ENCODE measurements at regions of chr1 and their contacts with region 1.

Region 1: DNA sequence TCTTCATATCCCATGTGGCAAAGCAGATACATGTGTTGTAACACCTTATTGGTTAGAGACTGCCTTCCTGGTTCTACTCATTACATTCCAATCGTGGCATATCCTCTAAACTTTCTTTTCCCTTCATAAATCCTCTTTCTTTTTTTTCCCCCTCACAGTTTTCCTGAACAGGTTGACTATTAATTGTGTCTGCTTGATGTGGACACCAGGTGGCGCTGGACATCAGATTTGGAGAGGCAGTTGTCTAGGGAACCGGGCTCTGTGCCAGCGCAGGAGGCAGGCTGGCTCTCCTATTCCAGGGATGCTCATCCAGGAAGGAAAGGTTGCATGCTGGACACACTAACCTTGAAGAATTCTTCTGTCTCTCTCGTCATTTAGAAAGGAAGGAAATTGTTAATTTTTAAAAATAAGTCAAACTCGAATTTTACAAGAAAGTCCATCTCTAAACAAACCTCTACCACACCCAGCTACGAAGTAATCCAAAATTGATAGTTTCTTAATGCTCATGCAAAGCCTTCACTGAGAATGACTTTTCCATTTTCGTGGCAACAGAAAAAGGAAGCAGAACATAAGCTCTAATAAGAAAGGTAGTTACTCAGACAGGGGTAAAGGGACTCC is 59.4 kb upstream of the ASB17 start:
- DNase-seq: peak; percentile 25
- H3K4me3 Mint-ChIP-seq: no peak overlapping the region
- H3K27ac Mint-ChIP-seq: no peak overlapping the region
- H3K4me1 Mint-ChIP-seq: no peaks in the 10 kb centered on the region
- H3K27me3 Mint-ChIP-seq: peaks cover 9% of the 10 kb centered on the region

Region 2: GRCh38 chr1:77126307-77126706 is 1134.7 kb after region 1 on chr1:
- intact Hi-C with region 1: loop called (anchors 5 kb)
- DNase-seq: no peak
- H3K4me3 Mint-ChIP-seq: no peak overlapping the region
- H3K27ac Mint-ChIP-seq: no peak overlapping the region
- H3K4me1 Mint-ChIP-seq: no peaks in the 10 kb centered on the region
- H3K27me3 Mint-ChIP-seq: no peaks in the 10 kb centered on the region

Region 3: DNA sequence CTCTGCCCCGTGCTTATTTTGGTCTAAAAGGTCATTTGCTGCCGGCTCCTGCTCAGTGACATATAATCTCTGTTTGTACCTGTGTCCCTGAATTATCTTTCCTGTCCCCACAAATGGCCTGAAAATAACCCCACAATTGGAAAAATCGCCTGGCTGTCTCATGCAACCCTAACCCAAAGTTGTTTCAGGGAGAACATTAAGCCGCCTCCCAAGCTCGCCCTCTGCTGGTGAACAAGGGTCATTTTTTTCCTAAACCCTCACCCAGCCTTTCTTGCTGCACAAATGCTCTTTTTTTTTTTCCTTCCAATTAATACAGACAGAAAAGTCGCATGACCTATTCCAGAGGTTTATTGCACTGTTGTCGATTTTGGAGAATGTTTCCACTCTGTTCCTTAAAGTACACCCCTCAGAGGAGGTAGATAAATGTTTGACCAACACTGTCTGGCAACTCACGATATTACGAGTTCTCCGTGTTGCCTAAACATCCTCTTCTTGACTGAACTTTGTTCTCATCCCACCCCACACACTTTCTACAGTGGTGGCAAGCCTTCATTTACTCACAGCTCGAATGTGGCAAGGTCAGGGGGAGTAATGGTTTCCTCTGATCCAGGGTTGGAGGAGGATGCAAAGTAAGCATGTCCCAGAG is 1542.2 kb after region 1 on chr1:
- intact Hi-C with region 1: loop called (anchors 5 kb)
- DNase-seq: peak; percentile 18
- H3K4me3 Mint-ChIP-seq: no peak overlapping the region
- H3K27ac Mint-ChIP-seq: no peak overlapping the region
- H3K4me1 Mint-ChIP-seq: no peaks in the 10 kb centered on the region
- H3K27me3 Mint-ChIP-seq: no peaks in the 10 kb centered on the region